PC-9 (cell line): ENCODE measurements at regions of chr1 and their contacts with region 1.

Region 1: DNA sequence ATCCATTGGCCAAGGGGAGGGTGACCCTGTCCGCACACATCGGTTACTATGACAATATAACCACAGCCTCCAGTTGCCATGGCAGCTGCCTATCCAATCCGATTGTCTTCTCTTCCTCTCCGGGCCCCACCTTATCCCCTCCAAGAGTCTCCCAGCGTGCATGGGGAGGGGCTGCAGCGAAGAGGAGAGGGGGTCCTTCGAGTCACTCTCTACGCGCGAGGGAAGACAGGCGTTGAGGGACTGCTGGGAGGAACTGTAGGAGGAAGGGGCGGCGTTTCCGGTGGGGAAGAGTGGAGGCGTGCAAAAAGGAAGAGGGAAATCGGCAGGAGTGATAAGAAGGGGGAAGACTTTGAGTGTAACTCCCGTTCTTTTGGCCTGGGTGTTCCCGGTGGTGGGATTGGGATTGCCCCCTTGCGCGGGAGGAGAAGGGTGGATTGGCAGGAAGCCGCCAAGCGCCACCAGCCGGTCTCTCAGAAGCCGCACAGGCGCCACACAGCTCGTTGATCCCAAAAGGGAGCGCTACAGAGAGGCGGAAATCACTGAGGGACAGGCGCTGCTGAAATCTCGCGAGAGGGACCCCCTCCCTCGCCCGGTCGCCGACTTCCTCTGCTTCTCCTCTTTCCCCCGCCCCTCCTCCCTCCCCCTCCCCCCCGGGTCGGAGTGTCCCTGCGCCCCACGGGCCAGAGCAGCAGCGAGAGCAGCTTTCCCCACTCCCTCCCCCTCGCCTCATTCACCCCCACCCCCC is 384 bp upstream of the SMG7 start:
- DNase-seq: peak; percentile 84 to 92
- H3K4me3 ChIP-seq: peak overlapping the region; percentile 82
- H3K27ac ChIP-seq: peak overlapping the region; percentile 94
- H3K4me1 ChIP-seq: peaks cover 59% of the 10 kb centered on the region
- H3K27me3 ChIP-seq: no peaks in the 10 kb centered on the region
- CTCF ChIP-seq: no peak; the same call in 1 of the 2 replicates

Region 2: GRCh38 chr1:183023601-183024316 is 448.2 kb before region 1 on chr1:
- CTCF ChIA-PET with region 1: no interaction called
- POLR2A ChIA-PET with region 1: no interaction called
- intact Hi-C with region 1: loop called (anchors 5 kb)
- DNase-seq: peak; percentile 81 to 87
- H3K4me3 ChIP-seq: peak overlapping the region; percentile 82
- H3K27ac ChIP-seq: peak overlapping the region; percentile 77
- H3K4me1 ChIP-seq: peaks cover 61% of the 10 kb centered on the region
- H3K27me3 ChIP-seq: no peaks in the 10 kb centered on the region
- CTCF ChIP-seq: peak; percentile 65

Region 3: GRCh38 chr1:183318433-183318832 is 153.5 kb before region 1 on chr1:
- CTCF ChIA-PET with region 1: no interaction called
- POLR2A ChIA-PET with region 1: no interaction called
- intact Hi-C with region 1: loop called (anchors 5 kb)
- DNase-seq: peak; percentile 60 to 70
- H3K4me3 ChIP-seq: no peak overlapping the region
- H3K27ac ChIP-seq: peak overlapping the region; percentile 22; the same call in 1 of the 2 replicates
- H3K4me1 ChIP-seq: peaks cover 33% of the 10 kb centered on the region
- H3K27me3 ChIP-seq: no peaks in the 10 kb centered on the region
- CTCF ChIP-seq: peak; percentile 62

Region 4: DNA sequence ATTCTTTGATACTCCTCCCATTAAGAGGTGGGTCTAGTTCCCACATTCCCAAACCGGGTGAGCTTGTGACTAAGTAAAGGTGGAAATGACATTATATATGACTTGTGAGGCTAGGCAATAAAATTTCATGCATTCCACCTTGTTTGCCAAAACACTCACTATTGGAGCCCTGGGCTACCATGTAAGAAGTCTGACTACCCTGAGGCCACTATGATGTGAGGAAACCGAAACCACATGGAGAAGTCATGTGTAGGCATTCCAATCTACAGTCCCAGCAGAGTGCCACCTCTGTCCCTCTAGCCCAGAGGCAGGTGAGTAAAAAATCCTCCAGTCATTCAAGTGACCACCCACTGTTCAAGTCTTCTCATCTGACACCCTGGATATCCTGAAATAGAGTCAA is 17.5 kb before region 1 on chr1:
- CTCF ChIA-PET with region 1: no interaction called
- POLR2A ChIA-PET with region 1: interaction called, 11 read pairs
- intact Hi-C with region 1: loop called (anchors 1 kb)
- DNase-seq: peak; percentile 70 to 99
- H3K4me3 ChIP-seq: no peak overlapping the region
- H3K27ac ChIP-seq: peak overlapping the region; percentile 98
- H3K4me1 ChIP-seq: peaks cover 27% of the 10 kb centered on the region
- H3K27me3 ChIP-seq: no peaks in the 10 kb centered on the region
- CTCF ChIP-seq: no peak

Region 5: DNA sequence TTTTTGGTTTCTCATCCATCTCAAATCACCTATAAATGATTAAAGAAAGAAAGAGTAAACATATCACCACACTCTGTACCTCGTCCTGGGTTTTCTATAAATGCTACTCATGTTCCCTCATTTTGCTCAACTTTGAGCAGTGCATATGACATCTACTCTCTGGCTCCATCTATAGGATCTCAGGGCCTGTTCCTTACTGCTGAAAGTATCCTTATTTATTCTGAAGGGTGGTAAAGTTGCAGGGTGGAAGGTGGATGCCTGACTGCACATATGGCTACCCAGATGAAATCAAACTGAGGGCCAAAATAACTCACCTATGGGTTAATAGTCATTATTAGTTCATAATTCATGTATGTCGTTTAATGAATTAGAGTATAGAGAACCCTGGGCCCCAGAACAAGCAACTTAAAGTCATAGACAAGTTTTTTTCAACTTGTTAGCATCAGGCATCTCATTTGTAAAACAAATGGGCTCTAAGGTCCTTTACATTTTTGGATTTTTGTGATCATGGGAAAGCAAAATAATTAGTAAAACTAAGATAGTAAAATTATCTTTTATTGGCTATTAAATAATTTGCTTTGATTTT is 71.8 kb after region 1 on chr1:
- CTCF ChIA-PET with region 1: no interaction called
- POLR2A ChIA-PET with region 1: no interaction called
- intact Hi-C with region 1: loop called (anchors 5 kb)
- DNase-seq: peak in 1 of 2 experiments; percentile 7
- H3K4me3 ChIP-seq: no peak overlapping the region
- H3K27ac ChIP-seq: peak overlapping the region; percentile 11; the same call in 1 of the 2 replicates
- H3K4me1 ChIP-seq: no peaks in the 10 kb centered on the region
- H3K27me3 ChIP-seq: no peaks in the 10 kb centered on the region
- CTCF ChIP-seq: peak; percentile 81